ENCODE measurements at regions of chr3 and their contacts with region 1.

Region 1: DNA sequence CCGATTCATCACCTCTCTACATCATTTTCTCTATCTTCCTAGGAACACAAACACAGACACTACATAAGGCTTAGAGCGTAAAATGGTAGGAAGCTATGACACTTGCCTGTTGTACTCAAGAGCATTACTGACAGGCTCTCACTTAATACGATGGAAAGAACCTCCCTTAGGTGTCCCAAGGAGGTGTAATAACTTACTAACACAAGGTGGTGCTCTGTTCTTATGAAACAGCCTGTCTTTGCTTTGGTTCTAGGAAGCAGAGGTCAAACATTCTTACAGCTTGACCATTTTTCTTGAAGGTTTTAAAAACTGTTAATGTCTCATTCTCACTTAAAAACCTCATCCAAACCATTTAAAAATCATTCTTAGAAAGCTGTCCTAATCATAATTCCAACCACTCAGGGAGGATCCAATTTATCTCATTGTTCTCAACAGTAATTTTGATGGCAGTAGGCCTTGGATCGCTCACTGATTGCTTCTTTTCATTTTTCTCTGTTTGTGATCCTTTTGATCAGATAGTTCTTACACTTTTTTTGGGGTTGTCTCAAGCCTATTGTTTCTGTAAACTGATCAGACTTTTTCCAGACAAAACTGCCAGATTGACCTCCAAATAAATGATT is 317.8 kb upstream of the AGTR1 start:
- DNase-seq: no peak
- ATAC-seq: peak; percentile 69
- H3K4me3 ChIP-seq: no peak overlapping the region
- H3K27ac ChIP-seq: no peak overlapping the region
- H3K4me1 ChIP-seq: no peaks in the 10 kb centered on the region
- H3K27me3 ChIP-seq: no peaks in the 10 kb centered on the region

Region 2: GRCh38 chr3:148631124-148631903 is 251.4 kb after region 1 on chr3:
- intact Hi-C with region 1: loop called (anchors 5 kb)
- DNase-seq: no peak
- ATAC-seq: no peak
- H3K4me3 ChIP-seq: no peak overlapping the region
- H3K27ac ChIP-seq: no peak overlapping the region
- H3K4me1 ChIP-seq: no peaks in the 10 kb centered on the region
- H3K27me3 ChIP-seq: no peaks in the 10 kb centered on the region

Region 3: DNA sequence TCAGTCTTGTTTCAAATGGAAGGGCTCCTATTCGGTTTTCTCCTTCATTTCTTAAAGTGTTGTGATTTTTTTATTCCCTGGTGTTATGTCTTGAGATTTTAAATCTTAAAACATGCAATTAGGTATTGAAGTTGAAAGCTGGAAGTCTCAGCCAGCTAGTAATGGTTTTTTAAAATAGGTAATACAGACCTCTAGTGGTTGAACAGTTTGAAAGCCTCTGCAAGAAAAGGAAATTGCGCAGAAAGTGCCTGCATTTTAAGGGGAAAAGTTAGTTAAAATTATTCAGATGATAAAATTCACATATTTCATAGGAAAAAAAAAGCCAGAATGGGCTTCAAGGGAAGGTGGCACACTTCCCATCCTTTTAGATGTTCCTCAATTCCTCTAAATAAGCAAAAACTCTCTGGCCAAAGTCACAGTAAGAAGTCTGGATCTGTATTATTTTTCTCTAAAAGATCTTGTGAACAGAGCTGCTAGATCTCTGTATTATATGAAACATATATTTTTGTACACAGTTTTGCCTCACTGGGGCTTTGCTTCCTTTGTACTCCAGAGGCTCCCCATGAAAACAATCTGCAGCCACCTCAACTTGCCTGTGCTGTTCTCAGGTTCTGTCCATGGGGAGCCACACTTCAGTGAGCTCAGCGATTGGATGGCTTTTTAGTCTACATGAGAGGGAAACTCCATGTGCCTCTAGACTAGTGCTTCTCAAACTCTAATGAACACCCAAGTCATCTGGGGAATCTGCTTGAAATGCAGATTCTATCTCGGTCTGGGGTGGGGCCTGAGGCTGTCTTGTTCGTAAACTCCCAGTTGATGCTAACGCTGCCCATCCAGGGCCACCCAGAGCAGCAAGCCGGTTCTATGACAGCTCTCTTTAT is 339.3 kb after region 1 on chr3:
- intact Hi-C with region 1: loop called (anchors 1 to 2 kb)
- DNase-seq: no peak
- ATAC-seq: no peak
- H3K4me3 ChIP-seq: no peak overlapping the region
- H3K27ac ChIP-seq: no peak overlapping the region
- H3K4me1 ChIP-seq: no peaks in the 10 kb centered on the region
- H3K27me3 ChIP-seq: no peaks in the 10 kb centered on the region

Region 4: GRCh38 chr3:148943506-148944205 is 563.8 kb after region 1 on chr3:
- intact Hi-C with region 1: loop called (anchors 5 kb)
- DNase-seq: no peak
- ATAC-seq: peak; percentile 75
- H3K4me3 ChIP-seq: no peak overlapping the region
- H3K27ac ChIP-seq: no peak overlapping the region
- H3K4me1 ChIP-seq: no peaks in the 10 kb centered on the region
- H3K27me3 ChIP-seq: no peaks in the 10 kb centered on the region

Measured in aorta (tissue), 5 donors.